Dorsolateral prefrontal cortex (tissue), 120 donors: ENCODE measurements at regions of chr6 and their contacts with region 1.

Region 1: GRCh38 chr6:48904809-48905208 is 558.2 kb downstream of the MMUT start:
- DNase-seq: no peak
- H3K4me3 ChIP-seq: no peak overlapping the region
- H3K27ac ChIP-seq: no peak overlapping the region
- H3K27me3 ChIP-seq: peaks cover 0 to 3% (median 0%) of the 10 kb centered on the region in 45 donors
- CTCF ChIP-seq: no peak

Region 2: GRCh38 chr6:48916556-48916955 is 11.7 kb after region 1 on chr6:
- intact Hi-C with region 1: loop called in 1 of 2 experiments (anchors 1 kb)
- DNase-seq: no peak
- H3K4me3 ChIP-seq: no peak overlapping the region
- H3K27ac ChIP-seq: no peak overlapping the region
- H3K27me3 ChIP-seq: no peaks in the 10 kb centered on the region
- CTCF ChIP-seq: no peak